BJ (cell line): ENCODE measurements at regions of chrX and their contacts with region 1.

Region 1: DNA sequence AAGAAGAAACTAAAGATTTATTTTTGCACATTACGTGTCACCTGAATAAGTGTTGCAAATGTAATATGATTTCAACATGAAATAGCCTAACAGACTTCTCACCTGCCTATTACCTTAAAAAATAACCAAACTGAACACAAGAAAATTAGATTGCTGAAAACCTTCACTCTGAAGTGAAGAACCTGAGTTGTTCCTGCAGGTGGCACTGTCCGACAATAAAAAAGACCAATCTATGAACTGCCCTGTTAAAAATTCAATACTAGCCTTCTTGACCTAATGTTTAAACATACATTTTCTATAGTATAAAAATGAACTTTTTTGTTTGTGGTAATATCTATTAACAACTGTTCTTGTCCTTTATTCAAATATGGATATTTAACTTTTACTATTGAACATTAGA is 69.2 kb upstream of the PNPLA4 start:
- DNase-seq: no peak
- H3K4me3 ChIP-seq: no peak overlapping the region
- H3K27me3 ChIP-seq: no peaks in the 10 kb centered on the region
- CTCF ChIP-seq: peak; percentile 42

Region 2: DNA sequence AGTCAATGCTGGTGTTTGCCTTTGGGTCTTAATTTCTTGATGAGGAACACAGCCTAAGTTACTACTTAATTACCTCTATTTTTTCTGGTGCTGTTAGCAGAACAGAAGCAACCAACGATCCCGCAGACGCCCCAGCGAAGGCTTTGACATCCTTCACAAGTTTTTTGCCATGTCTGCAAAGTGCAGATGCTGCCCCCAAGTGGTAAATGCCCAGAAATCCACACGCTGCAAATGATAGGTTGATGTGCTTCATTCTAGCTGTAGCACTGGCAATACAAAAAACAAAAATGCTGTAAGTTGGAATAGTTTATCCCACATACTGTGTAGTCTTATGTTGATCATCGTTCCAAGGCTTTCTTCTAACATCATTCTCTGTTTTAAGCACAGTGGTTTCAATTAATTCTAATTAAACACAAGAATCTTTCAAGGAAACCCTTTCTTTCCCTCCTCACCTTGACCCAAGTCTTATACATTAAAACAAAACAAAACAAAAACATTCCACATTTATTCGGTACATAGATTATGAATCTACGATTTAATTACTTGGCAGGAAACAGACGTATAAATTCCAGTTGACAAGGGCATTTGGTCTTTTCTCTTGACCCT is 70.4 kb before region 1 on chrX:
- CTCF ChIA-PET with region 1: no interaction called
- POLR2A ChIA-PET with region 1: no interaction called
- DNase-seq: peak; percentile 4
- H3K4me3 ChIP-seq: no peak overlapping the region
- H3K27me3 ChIP-seq: no peaks in the 10 kb centered on the region
- CTCF ChIP-seq: peak; percentile 75

Region 3: DNA sequence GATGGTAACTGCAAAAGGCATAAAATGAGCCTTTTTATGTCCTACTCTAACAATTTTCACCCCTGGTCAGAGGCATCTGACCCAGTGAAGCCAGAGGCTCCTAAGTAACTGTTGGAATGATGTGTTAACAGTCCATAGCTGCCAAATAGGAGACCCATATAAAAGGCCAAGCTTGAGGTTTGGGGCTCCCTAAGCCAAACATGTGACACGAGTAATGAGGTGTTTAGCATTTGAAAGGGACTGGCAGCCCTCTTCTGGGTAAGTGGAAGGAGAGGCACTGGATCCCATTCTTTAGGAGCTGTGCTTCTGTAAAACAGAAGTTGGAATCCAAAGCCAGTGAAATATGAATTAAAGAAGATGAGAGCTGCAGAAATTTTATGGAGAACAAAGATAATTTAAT is 31.4 kb after region 1 on chrX:
- CTCF ChIA-PET with region 1: no interaction called
- POLR2A ChIA-PET with region 1: no interaction called
- DNase-seq: no peak
- H3K4me3 ChIP-seq: no peak overlapping the region
- H3K27me3 ChIP-seq: no peaks in the 10 kb centered on the region
- CTCF ChIP-seq: no peak

Region 4: DNA sequence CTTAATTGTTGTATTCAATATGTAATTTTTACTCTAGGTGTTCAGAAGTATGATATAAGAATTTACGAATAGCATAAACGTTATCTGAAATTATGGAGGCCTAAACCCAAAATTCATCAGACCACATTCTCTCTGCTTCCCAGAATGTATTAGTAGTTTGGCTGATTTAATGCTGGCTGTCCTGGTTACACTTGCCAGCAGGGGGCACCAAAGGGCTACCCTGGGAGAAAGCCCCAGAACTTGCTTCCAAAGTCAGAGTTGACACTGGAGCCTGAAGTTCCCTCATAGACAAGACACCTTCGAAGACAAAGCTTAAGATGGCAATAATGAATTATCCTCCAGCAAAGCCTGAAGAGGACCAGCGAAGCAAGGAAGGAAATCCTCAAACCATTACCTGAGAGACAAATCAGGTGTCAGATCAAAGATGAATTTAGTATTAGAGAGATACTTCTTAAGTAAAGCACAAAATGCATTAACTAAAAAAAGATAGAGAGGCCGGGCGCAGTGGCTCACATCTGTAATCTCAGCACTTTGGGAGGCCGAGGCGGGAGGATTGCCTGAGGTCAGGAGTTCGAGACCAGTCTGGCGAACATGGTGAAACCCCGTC is 746.8 kb after region 1 on chrX:
- CTCF ChIA-PET with region 1: interaction called, 17 read pairs
- POLR2A ChIA-PET with region 1: no interaction called
- DNase-seq: no peak
- H3K4me3 ChIP-seq: no peak overlapping the region
- H3K27me3 ChIP-seq: no peaks in the 10 kb centered on the region
- CTCF ChIP-seq: peak; percentile 69